ENCODE measurements at regions of chr22 and their contacts with region 1.

Region 1: DNA sequence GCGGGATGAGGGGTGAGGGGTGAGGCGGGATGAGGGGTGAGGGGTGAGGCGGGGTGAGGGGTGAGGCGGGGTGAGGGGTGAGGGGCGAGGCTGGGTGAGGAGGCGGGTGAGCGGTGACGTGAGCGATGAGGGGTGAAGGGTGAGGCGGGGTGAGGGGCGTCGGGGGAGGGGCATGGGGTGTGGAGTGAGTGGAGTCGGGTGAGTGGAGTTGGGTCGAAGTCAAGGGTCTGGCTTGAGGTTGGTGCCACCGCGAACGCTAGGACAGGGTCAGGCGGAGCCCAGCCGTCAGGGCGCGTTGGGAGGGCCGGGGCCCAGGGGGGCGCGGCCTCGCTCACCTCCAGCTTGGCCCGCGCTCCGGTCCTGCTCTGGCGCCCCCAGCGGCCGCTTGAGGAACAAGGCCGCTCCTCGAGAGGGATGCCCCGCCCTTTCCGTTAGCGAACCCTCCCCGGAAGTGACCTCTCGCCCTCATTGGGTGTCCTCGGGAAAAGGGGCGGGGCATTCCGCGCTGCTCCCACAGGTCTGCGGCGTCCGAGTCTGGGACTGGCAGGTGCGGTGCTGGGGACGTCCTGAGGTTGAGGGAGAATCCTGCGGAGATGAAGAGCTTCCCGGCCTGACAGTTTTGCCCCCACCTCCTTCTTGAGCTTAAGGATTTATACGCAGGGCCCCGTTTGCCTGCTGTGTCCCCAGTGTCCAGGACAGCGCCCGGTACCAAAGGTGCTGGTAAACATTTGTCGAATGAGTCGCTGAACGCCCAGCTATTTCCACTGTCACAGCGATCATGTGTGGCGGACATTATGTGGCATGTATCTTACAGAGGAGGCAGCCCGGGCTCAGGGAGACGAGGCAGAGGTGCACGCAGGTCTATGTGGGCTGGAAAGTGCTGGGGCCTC is at the start of gene SYCE3:
- DNase-seq: peak; percentile 50
- H3K4me3 ChIP-seq: peak within 1 kb of the TSS; percentile 70
- H3K27ac ChIP-seq: no peak within 1 kb of the TSS
- H3K27me3 ChIP-seq: peaks cover 22% of the 10 kb centered on the region
- CTCF ChIP-seq: peak; percentile 78
- polyA plus RNA-seq, gene SYCE3: not detected in 2 replicates

Region 2: DNA sequence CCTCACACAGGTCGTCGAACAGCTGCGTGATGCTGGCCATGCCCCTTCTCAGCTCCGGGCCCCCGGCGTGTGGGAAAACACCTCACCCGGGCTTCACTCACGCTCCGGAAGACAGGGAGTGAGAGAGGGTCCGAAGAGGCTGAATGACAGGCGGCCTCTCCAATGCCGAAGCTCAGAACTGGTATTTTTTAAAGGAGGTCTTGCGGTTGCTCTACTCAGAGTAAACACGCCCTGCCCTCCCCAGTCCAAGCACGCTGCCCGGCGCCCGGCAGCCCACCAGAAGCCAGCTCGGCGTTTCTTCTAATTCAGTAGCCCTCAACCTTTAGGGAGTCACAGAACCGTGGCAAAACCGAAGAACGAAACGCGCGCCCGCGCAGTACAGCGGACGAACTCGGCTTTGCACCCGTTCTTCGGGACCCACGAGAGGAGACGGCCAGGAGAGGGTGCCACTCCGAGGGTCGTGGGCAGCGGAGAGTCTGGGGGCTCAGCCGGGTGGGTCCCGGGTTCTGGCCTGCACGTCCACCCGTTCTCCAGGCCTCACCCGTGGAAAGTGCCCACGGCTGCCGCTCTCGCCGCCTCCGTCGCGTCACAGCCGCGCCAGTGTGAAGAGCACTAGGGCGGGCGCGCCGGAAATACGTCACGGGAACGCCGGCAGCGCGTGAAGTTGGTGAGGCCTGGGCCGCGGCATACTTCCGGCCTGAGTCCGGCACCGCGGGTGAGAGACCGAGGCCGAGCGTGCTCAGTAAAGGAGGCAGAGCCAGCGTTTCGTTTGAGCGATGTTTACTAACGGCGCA is 318.2 kb before region 1 on chr22 and contains the start of gene TUBGCP6:
- CTCF ChIA-PET with region 1: no interaction called
- POLR2A ChIA-PET with region 1: no interaction called
- DNase-seq: peak; percentile 59
- H3K4me3 ChIP-seq: peak within 1 kb of the TSS; percentile 98
- H3K27ac ChIP-seq: peak within 1 kb of the TSS; percentile 77
- H3K27me3 ChIP-seq: no peaks in the 10 kb centered on the region
- CTCF ChIP-seq: peak; percentile 25; the same call in 1 of the 2 replicates
- polyA plus RNA-seq, gene TUBGCP6: 8.5 and 10.8 TPM in 2 replicates

Region 3: DNA sequence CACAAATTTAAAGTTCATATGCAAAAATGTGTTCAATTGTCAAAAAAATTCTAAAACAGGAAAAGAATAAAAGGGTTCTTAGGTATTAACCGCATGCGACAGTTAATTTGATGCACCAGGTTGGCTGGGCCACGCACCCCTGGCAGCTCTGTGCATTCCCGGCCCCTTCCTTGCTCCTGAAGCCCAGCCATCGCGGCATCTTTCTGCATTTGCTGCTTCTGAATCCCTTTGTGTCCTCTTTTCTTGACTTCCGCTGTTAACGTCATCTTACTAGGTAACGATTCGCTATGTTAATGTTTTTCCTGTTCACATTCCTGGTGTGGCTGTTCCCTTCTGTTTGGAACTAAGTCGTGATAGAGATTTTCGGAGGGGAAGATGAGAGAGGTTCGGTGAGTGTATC is 25.0 kb before region 1 on chr22:
- CTCF ChIA-PET with region 1: interaction called, 12 read pairs
- POLR2A ChIA-PET with region 1: no interaction called
- DNase-seq: no peak
- H3K4me3 ChIP-seq: no peak overlapping the region
- H3K27ac ChIP-seq: peak overlapping the region; percentile 99
- H3K27me3 ChIP-seq: no peaks in the 10 kb centered on the region
- CTCF ChIP-seq: no peak

Region 4: GRCh38 chr22:50548040-50548912 is 14.5 kb before region 1 on chr22:
- CTCF ChIA-PET with region 1: interaction called, 11 read pairs
- POLR2A ChIA-PET with region 1: no interaction called
- DNase-seq: no peak
- H3K4me3 ChIP-seq: no peak overlapping the region
- H3K27ac ChIP-seq: no peak overlapping the region
- H3K27me3 ChIP-seq: peaks cover 54% of the 10 kb centered on the region
- CTCF ChIP-seq: no peak

Region 5: GRCh38 chr22:50576070-50576469 is 13.3 kb after region 1 on chr22:
- CTCF ChIA-PET with region 1: interaction called, 27 read pairs
- POLR2A ChIA-PET with region 1: interaction called, 3 read pairs
- DNase-seq: no peak
- H3K4me3 ChIP-seq: no peak overlapping the region
- H3K27ac ChIP-seq: no peak overlapping the region
- H3K27me3 ChIP-seq: peaks cover 18% of the 10 kb centered on the region
- CTCF ChIP-seq: peak; percentile 42

Measured in AG04450 (cell line).